Psoas muscle (tissue), 8 donors: ENCODE measurements at regions of chr5 and their contacts with region 1.

Region 1: GRCh38 chr5:118946138-118946800 is 42.1 kb downstream of the DTWD2 start:
- DNase-seq: no peak
- ATAC-seq: no peak
- H3K4me3 ChIP-seq: no peak overlapping the region
- H3K27ac ChIP-seq: no peak overlapping the region
- H3K4me1 ChIP-seq: no peaks in the 10 kb centered on the region
- H3K27me3 ChIP-seq: no peaks in the 10 kb centered on the region
- CTCF ChIP-seq: no peak

Region 2: DNA sequence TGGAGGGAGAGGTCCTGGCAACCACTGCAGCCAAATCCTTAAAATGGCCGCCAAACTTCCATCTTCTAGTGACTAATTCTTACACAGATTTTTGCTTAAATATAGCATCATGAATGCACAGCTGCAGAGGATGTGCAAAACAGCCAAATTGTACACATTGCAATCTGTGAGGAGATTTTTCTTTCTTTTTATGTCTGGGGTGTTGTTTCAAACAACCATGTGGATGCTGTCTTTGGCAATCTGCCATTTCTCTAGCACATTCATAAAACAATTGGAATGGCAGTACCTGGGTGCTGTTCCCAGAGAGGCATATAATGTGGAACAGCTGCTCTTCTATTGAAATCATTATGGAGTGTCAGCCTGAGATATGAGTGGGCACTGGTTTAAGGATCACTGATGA is 1288.7 kb before region 1 on chr5:
- intact Hi-C with region 1: loop called in 1 of 2 experiments (anchors 5 kb)
- DNase-seq: no peak
- ATAC-seq: no peak
- H3K4me3 ChIP-seq: no peak overlapping the region
- H3K27ac ChIP-seq: no peak overlapping the region
- H3K4me1 ChIP-seq: no peaks in the 10 kb centered on the region
- H3K27me3 ChIP-seq: no peaks in the 10 kb centered on the region
- CTCF ChIP-seq: no peak

Region 3: GRCh38 chr5:118270526-118270925 is 675.7 kb before region 1 on chr5:
- intact Hi-C with region 1: no loop called
- DNase-seq: no peak
- ATAC-seq: no peak
- H3K4me3 ChIP-seq: no peak overlapping the region
- H3K27ac ChIP-seq: no peak overlapping the region
- H3K4me1 ChIP-seq: no peaks in the 10 kb centered on the region
- H3K27me3 ChIP-seq: no peaks in the 10 kb centered on the region
- CTCF ChIP-seq: no peak

Region 4: GRCh38 chr5:118981783-118982182 is 35.5 kb after region 1 on chr5:
- intact Hi-C with region 1: no loop called
- DNase-seq: no peak
- ATAC-seq: no peak
- H3K4me3 ChIP-seq: no peak overlapping the region
- H3K27ac ChIP-seq: no peak overlapping the region
- H3K4me1 ChIP-seq: peaks cover 4% of the 10 kb centered on the region
- H3K27me3 ChIP-seq: no peaks in the 10 kb centered on the region
- CTCF ChIP-seq: no peak

Region 5: GRCh38 chr5:119009131-119009530 is 62.9 kb after region 1 on chr5:
- intact Hi-C with region 1: no loop called
- DNase-seq: no peak
- ATAC-seq: no peak
- H3K4me3 ChIP-seq: no peak overlapping the region
- H3K27ac ChIP-seq: no peak overlapping the region
- H3K4me1 ChIP-seq: no peaks in the 10 kb centered on the region
- H3K27me3 ChIP-seq: no peaks in the 10 kb centered on the region
- CTCF ChIP-seq: no peak